Tibial artery (tissue), 4 donors: ENCODE measurements at regions of chr2 and their contacts with region 1.

Region 1: DNA sequence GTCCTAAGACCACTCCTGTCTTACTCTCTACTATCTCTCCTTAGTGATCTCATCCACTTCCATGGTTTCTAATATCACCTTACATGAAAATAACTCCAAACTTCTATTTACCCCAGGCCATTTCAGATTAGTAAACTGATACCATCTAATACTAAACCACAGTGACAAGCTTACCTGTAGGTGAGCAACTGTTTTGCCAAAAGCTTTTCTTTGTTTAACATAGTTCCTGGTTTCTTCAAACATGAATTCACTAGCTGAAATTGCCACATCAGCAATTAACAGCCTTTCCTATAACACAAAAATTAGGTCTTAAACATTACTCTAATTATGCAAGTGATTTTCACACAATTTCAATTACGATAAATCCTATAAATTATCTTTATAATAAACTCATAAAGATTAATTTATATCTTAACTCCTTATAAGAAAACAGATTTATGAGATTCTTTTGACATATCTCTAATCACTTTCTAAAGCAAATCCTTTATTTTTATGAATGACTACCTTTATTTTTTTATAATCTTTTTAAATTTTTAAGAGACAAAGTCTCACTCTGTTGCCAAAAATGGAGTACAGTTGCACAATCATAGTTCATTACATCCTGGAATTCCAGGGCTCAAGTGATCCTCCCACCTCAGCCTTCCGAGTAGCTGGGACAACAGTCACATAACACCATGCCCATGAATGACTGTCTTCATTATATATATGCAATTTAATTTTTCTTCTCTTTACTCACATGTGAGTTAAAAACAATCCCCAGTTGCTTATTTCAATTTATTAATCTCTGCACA is 21.9 kb downstream of the ACADL start:
- DNase-seq: no peak
- H3K4me3 ChIP-seq: no peak overlapping the region
- H3K27ac ChIP-seq: peak overlapping the region in 1 of 2 donors; percentile 18
- H3K4me1 ChIP-seq: peaks cover 0 to 14% (median 0%) of the 10 kb centered on the region in 4 donors
- H3K27me3 ChIP-seq: no peaks in the 10 kb centered on the region
- CTCF ChIP-seq: no peak

Region 2: DNA sequence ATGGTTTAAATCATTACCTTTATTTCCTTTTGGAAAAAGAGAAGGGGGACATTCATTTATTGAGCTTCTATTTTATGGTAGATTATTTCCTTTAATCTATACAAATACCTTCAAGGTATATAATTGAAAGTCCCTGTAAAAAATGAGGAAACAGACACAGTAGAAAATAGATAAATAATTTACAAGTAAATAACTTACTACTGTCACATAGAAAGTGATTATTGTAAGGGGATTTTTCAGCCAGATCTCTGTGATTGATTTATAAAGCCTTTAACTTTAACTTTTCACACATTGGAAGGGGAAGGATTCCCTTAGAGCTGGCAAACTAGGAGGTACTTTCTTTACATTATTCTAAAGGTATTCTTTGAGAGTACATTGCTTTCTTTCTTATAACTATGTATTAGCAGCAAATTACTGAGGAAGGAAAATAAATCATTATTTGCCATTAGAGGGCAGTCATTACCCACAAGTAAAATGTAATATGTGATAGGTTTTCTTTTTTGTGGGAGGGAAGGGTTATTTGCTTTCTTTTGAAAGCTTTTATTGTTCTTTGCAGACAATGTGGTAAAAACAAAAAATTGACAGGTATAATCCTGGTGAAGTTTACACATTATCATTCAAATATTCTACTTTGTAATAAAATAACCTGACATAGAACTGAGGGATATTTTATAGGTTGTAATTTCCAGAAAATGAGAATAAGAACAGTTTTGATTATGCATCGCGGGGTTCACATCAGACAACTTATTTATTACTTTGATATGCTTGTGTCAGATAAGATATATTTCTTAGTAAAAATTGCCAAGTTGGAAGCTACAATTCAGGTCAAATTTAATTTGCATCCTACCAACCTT is 225.7 kb before region 1 on chr2:
- intact Hi-C with region 1: loop called (anchors 5 kb)
- DNase-seq: no peak
- H3K4me3 ChIP-seq: no peak overlapping the region
- H3K27ac ChIP-seq: no peak overlapping the region
- H3K4me1 ChIP-seq: no peaks in the 10 kb centered on the region
- H3K27me3 ChIP-seq: no peaks in the 10 kb centered on the region
- CTCF ChIP-seq: peak; percentile 59 to 64